ENCODE measurements at regions of chr15 and their contacts with region 1.

Region 1: GRCh38 chr15:60507596-60508424 is 28.9 kb upstream of the ICE2 start:
- DNase-seq: peak; percentile 69
- H3K4me3 ChIP-seq: no peak overlapping the region
- H3K27ac ChIP-seq: peak overlapping the region in 1 of 4 donors; percentile 22
- H3K4me1 ChIP-seq: peaks cover 0 to 4% (median 0%) of the 10 kb centered on the region in 4 donors
- H3K27me3 ChIP-seq: no peaks in the 10 kb centered on the region
- CTCF ChIP-seq: peak; percentile 67 to 91 (median 77)
- EP300 ChIP-seq: no peak
- POLR2A ChIP-seq: no peak

Region 2: DNA sequence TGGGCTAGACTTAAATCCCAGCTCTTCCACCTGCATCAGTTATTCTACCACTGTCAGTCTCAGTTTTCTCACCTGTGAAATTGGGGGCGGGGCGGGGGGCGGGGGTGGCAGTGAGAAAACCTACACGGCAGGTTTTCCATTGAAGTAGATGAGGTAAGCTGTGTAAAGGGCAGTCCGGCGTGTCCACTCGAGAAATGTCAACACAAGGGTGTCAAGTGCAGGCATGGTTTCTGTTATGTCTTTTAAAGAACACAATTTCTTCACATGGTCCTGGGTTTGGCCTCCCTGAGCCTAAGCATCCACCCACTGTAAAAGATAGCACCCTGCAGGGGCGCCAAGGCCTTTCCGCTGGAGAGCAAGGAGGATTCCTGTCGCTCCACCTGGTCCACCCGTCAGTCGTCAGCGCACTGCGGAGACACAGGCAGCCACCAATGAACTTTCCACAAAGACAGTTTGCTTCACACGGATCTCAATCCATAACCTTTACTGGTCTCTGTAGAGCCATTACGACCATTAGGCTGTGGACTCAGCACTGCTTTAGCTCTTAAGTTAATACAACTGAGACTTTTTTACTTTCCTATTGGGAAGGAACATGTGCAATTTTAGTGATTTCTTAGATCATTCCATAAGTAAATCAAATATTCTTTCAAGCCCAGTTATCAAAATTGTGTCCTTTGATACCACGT is 603.2 kb before region 1 on chr15:
- intact Hi-C with region 1: no loop called
- DNase-seq: no peak
- H3K4me3 ChIP-seq: no peak overlapping the region
- H3K27ac ChIP-seq: no peak overlapping the region
- H3K4me1 ChIP-seq: no peaks in the 10 kb centered on the region
- H3K27me3 ChIP-seq: peaks cover 0 to 18% (median 0%) of the 10 kb centered on the region in 3 donors
- CTCF ChIP-seq: no peak
- EP300 ChIP-seq: no peak
- POLR2A ChIP-seq: no peak

Region 3: DNA sequence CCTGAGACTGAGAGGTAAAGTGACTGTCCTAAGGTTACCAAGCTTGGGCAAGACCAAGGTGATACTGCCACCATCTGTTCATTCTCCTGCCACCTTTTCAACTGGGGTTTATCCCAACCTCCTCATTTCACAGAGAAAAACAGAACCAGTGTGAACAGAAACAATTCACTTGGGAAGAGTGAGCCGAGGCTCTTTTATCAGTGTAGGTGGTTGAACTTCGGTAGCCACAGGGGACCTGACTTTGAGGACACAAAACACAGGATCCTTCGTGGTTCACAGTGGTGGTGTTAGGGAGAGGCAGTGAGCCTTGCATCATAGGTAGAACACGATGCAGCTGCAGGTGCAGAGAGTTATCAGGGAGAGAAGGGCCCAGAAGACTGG is 44.0 kb after region 1 on chr15:
- intact Hi-C with region 1: no loop called
- DNase-seq: no peak
- H3K4me3 ChIP-seq: no peak overlapping the region
- H3K27ac ChIP-seq: no peak overlapping the region
- H3K4me1 ChIP-seq: peaks cover 0 to 13% (median under 1%) of the 10 kb centered on the region in 4 donors
- H3K27me3 ChIP-seq: no peaks in the 10 kb centered on the region
- CTCF ChIP-seq: no peak
- EP300 ChIP-seq: no peak
- POLR2A ChIP-seq: no peak

Region 4: DNA sequence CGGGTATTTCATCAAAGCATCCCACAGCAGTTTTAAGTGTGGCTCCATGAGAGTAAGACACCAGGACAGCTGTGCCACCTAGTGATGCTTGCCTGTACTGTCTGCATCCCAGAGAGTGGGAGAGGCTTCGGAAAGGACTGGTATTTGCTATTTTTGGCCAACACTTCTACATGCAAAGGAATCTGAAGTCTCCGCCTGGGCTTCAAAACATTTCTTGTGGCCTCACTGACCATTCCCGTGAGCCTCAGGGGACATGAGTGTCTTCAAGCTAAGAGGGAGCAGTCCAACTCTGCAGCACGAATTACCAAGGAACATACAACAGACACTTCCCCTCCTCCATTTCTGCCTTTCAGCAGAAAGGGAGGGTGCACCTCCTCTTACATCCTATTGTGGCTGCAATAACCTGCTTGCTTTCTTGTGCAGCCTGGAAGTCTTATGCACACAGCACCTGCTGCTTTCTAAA is 543.8 kb after region 1 on chr15:
- intact Hi-C with region 1: loop called (anchors 5 kb)
- DNase-seq: peak; percentile 71
- H3K4me3 ChIP-seq: no peak overlapping the region
- H3K27ac ChIP-seq: peak overlapping the region in 3 of 4 donors; percentile 57 to 64 (median 57)
- H3K4me1 ChIP-seq: peaks cover 0 to 36% (median 21%) of the 10 kb centered on the region in 4 donors
- H3K27me3 ChIP-seq: no peaks in the 10 kb centered on the region
- CTCF ChIP-seq: peak; percentile 11 to 61 (median 45)
- EP300 ChIP-seq: no peak
- POLR2A ChIP-seq: no peak

Region 5: DNA sequence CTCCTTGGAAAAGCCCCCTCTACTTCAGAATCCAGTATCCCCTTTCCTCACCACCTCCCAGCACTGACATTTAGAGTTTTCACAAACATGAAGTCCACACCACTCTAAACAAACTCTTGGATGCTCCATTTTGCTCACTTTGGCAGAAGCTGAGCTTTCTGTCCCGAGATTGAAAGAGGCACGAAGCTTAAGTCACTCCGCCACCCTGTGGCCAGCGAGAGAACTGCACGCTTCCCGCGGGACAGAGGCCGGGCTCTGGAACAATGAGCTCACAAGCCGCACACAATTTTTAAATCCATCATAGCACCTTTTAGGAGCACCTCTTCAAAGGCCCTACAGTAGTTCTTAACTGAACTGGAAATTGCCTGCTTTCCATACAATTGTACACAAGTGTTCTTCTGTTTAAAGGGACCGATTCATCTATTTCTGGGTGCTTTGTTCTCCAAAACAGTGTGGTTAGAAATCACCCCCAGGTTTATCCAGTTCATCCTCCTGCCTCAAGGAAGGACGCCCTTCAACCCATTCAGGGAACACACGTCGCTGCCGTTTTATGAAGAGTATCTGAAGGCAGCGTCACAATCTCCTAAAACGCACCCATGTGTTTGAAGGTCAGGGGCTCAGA is 1326.4 kb after region 1 on chr15:
- intact Hi-C with region 1: loop called (anchors 2 kb)
- DNase-seq: peak; percentile 88
- H3K4me3 ChIP-seq: no peak overlapping the region
- H3K27ac ChIP-seq: no peak overlapping the region
- H3K4me1 ChIP-seq: peaks cover 0 to 5% (median 0%) of the 10 kb centered on the region in 4 donors
- H3K27me3 ChIP-seq: no peaks in the 10 kb centered on the region
- CTCF ChIP-seq: peak; percentile 78 to 95 (median 85)
- EP300 ChIP-seq: no peak
- POLR2A ChIP-seq: no peak